Activated B cell treated with CpG ODN at 0.5 μM for 24 hours (primary cell): ENCODE measurements at regions of chr19 and their contacts with region 1.

Region 1: GRCh38 chr19:48170038-48170812 is at the starts of genes LIG1 and ZSWIM9:
- DNase-seq: peak; percentile 93
- ATAC-seq: peak; percentile 83
- H3K4me3 Mint-ChIP-seq: peak within 1 kb of the TSS; percentile 100
- H3K27ac Mint-ChIP-seq: peak within 1 kb of the TSS; percentile 99
- H3K4me1 Mint-ChIP-seq: peaks cover 21% of the 10 kb centered on the region
- H3K27me3 Mint-ChIP-seq: no peaks in the 10 kb centered on the region
- CTCF ChIP-seq: no peak
- total RNA-seq, gene LIG1: 41.8 and 42.9 TPM in 2 replicates
- total RNA-seq, gene ZSWIM9: 5.7 and 8.6 TPM in 2 replicates

Region 2: DNA sequence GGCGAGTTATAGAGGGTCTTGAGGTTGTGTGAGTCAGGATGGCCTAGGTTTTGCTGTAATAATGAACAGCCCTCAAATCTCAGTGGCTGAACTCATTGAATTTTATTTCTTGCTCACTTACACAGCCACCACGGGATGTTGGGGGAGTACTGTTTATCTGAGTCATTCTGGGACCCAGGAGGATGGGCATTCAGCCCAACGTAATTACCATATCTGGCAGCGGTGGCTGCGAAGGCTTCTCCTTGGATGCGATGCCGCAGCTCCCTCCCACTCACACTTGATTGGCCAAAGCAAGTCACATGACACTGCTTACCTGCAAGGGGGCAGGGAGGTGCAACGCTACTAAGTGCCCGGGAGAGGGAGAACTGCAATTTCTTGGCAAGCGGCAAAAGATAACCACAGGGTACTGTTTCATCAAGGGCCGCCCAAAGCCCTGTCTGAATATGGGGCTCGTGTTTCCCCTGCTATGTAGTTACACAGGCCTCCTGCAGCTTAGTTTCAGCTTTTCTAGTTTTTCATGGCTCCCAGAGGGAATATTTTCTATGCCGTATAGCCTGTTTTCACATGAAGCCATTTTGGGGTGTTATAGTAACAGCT is 20.2 kb after region 1 on chr19:
- CTCF ChIA-PET with region 1: interaction called, 4 read pairs
- POLR2A ChIA-PET with region 1: interaction called, 27 read pairs
- intact Hi-C with region 1: no loop called
- DNase-seq: no peak
- ATAC-seq: peak; percentile 65
- H3K4me3 Mint-ChIP-seq: no peak overlapping the region
- H3K27ac Mint-ChIP-seq: no peak overlapping the region
- H3K4me1 Mint-ChIP-seq: peaks cover 25% of the 10 kb centered on the region
- H3K27me3 Mint-ChIP-seq: no peaks in the 10 kb centered on the region
- CTCF ChIP-seq: no peak

Region 3: DNA sequence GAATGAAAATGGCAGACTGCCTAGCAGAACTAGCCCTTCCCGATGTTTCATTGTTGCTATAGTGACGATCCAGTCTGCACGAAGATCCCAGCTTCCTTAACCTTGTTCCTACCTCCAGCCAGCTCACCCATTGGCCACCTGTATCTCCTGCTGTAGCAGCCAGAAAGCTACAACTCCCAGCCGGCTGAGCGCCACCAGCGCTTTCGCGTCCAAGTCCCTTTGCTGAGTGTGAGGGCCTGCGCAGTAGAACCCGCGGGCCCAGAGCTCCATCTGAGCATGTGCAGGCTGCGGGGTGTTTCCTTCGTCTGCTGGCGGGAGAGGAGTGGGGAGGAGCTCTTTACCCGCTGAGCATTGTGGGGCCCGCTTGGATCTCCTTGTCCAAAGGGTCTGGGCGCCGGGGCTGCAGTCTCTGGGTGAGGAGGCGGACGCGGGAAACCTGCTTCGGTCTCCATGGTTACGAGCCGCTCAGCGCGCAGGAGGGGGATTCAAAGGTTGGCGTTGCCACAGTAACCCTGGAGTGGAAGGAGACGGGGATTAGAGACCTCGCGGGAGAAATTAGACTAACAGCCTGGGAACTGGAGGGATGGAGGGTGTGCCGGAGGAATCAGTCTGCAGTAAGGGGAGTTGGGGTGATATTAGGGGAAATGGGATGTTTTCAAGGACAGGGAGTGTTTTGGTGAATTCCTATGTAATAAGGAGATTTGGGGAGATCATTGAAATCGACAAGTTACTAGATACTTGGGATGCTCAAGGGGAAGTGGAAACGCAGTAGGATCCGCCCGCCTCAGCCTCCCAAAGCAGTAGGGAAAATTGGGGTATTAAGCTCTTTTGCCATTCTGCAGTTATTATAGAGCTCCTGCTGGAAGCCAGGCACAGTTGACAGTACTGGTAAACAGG is 33.8 kb after region 1 on chr19:
- CTCF ChIA-PET with region 1: no interaction called
- POLR2A ChIA-PET with region 1: interaction called, 14 read pairs
- intact Hi-C with region 1: loop called (anchors 1 kb)
- DNase-seq: peak; percentile 79
- ATAC-seq: peak; percentile 100
- H3K4me3 Mint-ChIP-seq: no peak overlapping the region
- H3K27ac Mint-ChIP-seq: no peak overlapping the region
- H3K4me1 Mint-ChIP-seq: peaks cover 6% of the 10 kb centered on the region
- H3K27me3 Mint-ChIP-seq: no peaks in the 10 kb centered on the region
- CTCF ChIP-seq: no peak

Region 4: GRCh38 chr19:48249502-48250014 is 79.3 kb after region 1 on chr19:
- CTCF ChIA-PET with region 1: no interaction called
- POLR2A ChIA-PET with region 1: interaction called, 15 read pairs
- intact Hi-C with region 1: no loop called
- DNase-seq: peak; percentile 41
- ATAC-seq: peak; percentile 87
- H3K4me3 Mint-ChIP-seq: peak overlapping the region; percentile 91
- H3K27ac Mint-ChIP-seq: peak overlapping the region; percentile 97
- H3K4me1 Mint-ChIP-seq: peaks cover 61% of the 10 kb centered on the region
- H3K27me3 Mint-ChIP-seq: no peaks in the 10 kb centered on the region
- CTCF ChIP-seq: no peak

Region 5: GRCh38 chr19:48513289-48514122 is 343.3 kb after region 1 on chr19:
- CTCF ChIA-PET with region 1: no interaction called
- POLR2A ChIA-PET with region 1: no interaction called
- intact Hi-C with region 1: loop called (anchors 1 kb)
- DNase-seq: peak; percentile 51
- ATAC-seq: peak; percentile 90
- H3K4me3 Mint-ChIP-seq: no peak overlapping the region
- H3K27ac Mint-ChIP-seq: peak overlapping the region; percentile 69
- H3K4me1 Mint-ChIP-seq: peaks cover 17% of the 10 kb centered on the region
- H3K27me3 Mint-ChIP-seq: peaks cover 2% of the 10 kb centered on the region
- CTCF ChIP-seq: no peak

Region 6: DNA sequence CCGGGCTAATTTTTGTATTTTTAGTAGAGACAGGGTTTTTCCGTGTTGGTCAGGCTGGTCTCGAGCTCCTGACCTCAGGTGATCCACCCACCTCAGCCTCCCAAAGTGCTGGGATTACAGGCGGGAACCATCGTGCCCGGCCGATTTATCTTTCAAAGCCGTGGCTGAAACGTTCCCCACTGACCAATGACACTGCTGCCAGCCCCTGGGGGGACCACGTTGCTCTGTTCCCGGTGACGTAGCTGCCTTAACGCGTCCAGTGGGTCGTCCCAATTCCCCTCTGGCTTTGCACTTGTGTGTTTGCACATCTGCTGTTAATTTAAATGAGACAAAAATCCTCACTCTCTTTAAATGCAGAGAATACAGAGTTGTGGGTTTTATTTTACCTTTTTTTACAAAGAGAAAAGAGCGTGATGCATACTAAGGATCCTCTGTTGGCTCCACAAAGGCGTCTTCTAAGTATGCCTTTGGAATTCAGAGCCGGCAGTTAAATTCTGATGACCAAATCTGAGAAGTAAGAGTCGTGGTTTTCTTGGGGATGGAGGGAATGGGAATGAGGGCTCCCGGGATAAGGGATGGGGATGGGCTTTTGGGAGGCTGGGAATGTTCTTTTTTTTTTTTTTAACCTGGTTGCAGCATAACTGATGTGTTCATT is 360.0 kb after region 1 on chr19:
- CTCF ChIA-PET with region 1: no interaction called
- POLR2A ChIA-PET with region 1: no interaction called
- intact Hi-C with region 1: no loop called
- DNase-seq: no peak
- ATAC-seq: no peak
- H3K4me3 Mint-ChIP-seq: no peak overlapping the region
- H3K27ac Mint-ChIP-seq: no peak overlapping the region
- H3K4me1 Mint-ChIP-seq: no peaks in the 10 kb centered on the region
- H3K27me3 Mint-ChIP-seq: peaks cover 12% of the 10 kb centered on the region
- CTCF ChIP-seq: no peak